ENCODE measurements at regions of chr2 and their contacts with region 1.

Region 1: GRCh38 chr2:163191372-163191771 is 352.8 kb upstream of the KCNH7 start:
- DNase-seq: peak; percentile 33

Region 2: DNA sequence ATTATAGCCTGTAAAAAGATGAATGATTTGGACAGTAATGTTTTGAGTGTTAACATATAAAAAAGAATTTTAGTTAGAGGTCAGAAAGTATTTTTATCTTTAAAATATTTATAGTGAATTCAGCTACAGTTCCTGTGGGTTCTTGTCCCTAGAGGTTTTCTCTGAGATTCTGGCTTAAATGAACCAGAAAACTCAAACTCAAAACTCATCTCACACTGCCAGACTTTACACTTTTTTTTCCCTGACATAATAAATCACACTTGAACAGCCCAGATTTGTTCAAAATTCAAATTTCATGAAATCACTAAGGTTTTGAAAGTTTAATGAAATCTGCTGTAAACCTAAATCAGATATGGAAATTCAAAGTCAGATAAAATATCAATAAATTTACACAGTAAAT is 445.1 kb before region 1 on chr2:
- in situ Hi-C with region 1: no loop called
- DNase-seq: no peak

Region 3: GRCh38 chr2:164061129-164061746 is 869.9 kb after region 1 on chr2:
- in situ Hi-C with region 1: loop called (anchors 25 kb)
- DNase-seq: peak; percentile 67

Region 4: DNA sequence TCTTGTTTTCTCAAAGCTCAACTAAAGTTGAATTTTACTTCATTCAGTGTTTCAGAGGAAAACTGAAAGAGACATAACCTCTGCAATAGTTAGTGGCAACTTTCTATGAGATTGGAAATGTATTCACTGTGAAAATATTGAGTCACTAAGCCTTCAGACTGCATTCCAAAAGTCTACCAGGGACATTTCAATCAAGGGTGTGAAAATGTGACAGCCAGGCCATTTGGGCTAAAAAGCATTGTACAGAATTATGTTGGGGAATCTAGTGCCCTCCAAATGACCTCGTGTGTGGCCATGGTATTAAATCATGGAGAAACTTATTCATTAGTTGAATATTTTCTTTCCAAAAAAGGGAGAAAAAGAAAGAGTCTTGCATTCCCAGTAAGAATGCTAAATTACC is 1178.0 kb after region 1 on chr2:
- in situ Hi-C with region 1: no loop called
- DNase-seq: no peak

Measured in KBM-7 (cell line).